H1 (cell line): ENCODE measurements at regions of chr2 and their contacts with region 1.

Region 1: GRCh38 chr2:10408649-10409579 is 39.2 kb downstream of the ODC1 start:
- DNase-seq: peak; percentile 84 to 93
- H3K4me3 ChIP-seq: no peak overlapping the region
- H3K27ac ChIP-seq: no peak overlapping the region
- H3K4me1 ChIP-seq: peaks cover 0 to 3% (median 2%) of the 10 kb centered on the region in 4 experiments; a peak in 2 of 7 replicates
- H3K27me3 ChIP-seq: no peaks in the 10 kb centered on the region; a peak in 1 of 7 replicates
- CTCF ChIP-seq: peak; percentile 94 to 99 (median 97)
- EP300 ChIP-seq: no peak
- POLR2A ChIP-seq: no peak
- RAD21 ChIP-seq: peak; percentile 98 to 99

Region 2: DNA sequence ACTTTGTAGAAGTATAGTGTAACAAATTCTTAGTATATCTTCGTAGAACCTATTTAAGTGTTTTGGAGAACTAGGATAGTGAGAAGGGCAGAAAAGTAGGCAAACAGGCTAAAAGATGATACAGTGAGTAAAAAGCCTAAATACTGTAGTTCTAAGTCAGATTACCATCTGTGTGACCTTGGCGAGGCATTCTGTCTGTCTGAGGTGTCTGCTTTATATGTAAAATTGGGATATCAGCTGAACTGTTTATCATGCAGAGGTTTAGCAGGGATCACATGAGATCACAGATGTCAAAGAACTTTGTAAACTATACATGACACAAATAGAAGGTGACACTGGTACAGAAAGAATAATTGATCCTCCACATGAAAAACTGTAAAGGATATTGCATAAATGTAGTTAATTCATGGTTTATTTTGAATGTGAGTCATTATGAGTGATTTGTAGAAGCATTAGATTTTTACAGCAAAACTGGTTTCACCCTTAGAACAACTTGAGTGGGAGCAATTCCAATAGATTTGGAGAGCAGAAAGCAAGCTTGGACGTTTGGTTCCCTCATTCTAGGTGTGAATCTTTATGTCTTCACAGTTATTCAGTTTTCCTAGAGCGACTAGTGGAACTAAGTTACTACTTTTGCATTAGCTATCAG is 523.8 kb before region 1 on chr2:
- CTCF ChIA-PET with region 1: no interaction called
- POLR2A ChIA-PET with region 1: no interaction called
- DNase-seq: no peak
- H3K4me3 ChIP-seq: no peak overlapping the region
- H3K27ac ChIP-seq: no peak overlapping the region
- H3K4me1 ChIP-seq: peaks cover 0 to 10% (median 4%) of the 10 kb centered on the region in 4 experiments; a peak in 6 of 7 replicates
- H3K27me3 ChIP-seq: no peaks in the 10 kb centered on the region
- CTCF ChIP-seq: no peak
- EP300 ChIP-seq: no peak
- POLR2A ChIP-seq: no peak
- RAD21 ChIP-seq: no peak

Region 3: GRCh38 chr2:10141736-10142642 is 266.9 kb before region 1 on chr2:
- CTCF ChIA-PET with region 1: interaction called, 30 read pairs
- POLR2A ChIA-PET with region 1: interaction called, 6 read pairs
- DNase-seq: peak in 1 of 2 experiments; percentile 77
- H3K4me3 ChIP-seq: no peak overlapping the region
- H3K27ac ChIP-seq: no peak overlapping the region
- H3K4me1 ChIP-seq: peaks cover 0 to 3% (median 0%) of the 10 kb centered on the region in 4 experiments; a peak in 1 of 7 replicates
- H3K27me3 ChIP-seq: 0 out of 7 replicates have a peak, but pooled peaks cover 0 to 3% (median 0%) of the 10 kb centered on the region in 4 experiments
- CTCF ChIP-seq: peak; percentile 64 to 80 (median 78)
- EP300 ChIP-seq: no peak
- POLR2A ChIP-seq: no peak
- RAD21 ChIP-seq: peak; percentile 64 to 65

Region 4: DNA sequence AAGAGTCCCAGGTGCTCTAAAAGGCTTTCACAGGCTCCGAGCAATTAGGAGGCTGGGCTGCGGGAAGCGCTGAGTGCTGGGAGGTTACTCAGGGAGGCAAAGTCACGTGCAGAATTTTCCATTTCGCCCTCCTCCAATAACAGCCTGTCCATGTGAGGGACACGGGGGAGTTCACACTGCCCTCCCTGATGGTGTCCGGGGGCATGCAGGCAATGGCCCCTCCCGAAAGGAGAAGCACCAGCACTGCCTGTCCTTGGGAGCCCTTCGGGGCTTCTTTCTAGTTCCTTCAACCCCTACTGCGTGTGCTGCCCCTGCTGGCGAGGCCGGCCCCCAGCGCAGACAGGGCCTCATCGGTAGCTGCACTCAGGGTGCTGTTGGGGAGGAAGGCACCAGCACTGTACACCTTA is 169.3 kb before region 1 on chr2:
- CTCF ChIA-PET with region 1: interaction called, 11 read pairs
- POLR2A ChIA-PET with region 1: no interaction called
- DNase-seq: peak in 1 of 2 experiments; percentile 69
- H3K4me3 ChIP-seq: no peak overlapping the region
- H3K27ac ChIP-seq: no peak overlapping the region
- H3K4me1 ChIP-seq: peaks cover 0 to 3% (median 0%) of the 10 kb centered on the region in 4 experiments; a peak in 1 of 7 replicates
- H3K27me3 ChIP-seq: no peaks in the 10 kb centered on the region
- CTCF ChIP-seq: peak in 2 of 3 experiments; percentile 52 to 67; a peak in 3 of 4 replicates
- EP300 ChIP-seq: no peak
- POLR2A ChIP-seq: no peak
- RAD21 ChIP-seq: peak; percentile 35 to 55; a peak in 3 of 4 replicates

Region 5: DNA sequence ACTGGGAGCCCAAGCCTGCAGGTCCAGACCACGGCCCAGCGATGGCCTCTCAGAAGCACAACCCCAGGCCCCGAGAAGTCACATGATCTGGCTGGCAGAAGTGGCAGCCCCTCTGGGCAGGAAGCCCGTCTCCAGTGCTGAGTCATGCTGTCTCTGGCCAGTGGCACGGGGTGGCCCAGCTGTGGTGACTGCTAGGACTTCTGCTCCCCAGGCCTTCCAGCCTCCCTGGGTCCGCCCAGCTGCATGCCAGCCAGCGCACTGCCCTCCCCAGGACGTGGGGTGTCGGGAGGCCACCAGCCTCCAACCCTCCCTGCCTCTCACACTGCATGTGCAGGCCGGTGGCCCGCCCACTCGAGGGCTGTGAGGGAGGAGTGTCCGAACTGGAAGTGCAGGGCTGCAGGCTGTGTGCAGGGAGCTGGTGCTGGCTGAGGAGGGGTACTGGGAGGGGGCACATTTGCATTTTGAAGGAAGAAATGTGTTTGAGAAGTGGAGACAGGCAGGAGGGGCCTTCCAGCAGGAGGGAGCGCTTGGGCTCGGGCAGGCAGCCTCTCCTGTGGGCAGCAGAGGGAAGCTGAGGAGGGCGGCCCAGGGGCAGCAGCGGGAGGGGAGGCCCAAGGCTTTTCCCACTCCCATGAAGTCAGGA is 123.2 kb before region 1 on chr2:
- CTCF ChIA-PET with region 1: interaction called, 22 read pairs
- POLR2A ChIA-PET with region 1: no interaction called
- DNase-seq: peak in 1 of 2 experiments; percentile 54
- H3K4me3 ChIP-seq: no peak overlapping the region
- H3K27ac ChIP-seq: no peak overlapping the region; the same call in 1 of the 2 replicates
- H3K4me1 ChIP-seq: peaks cover 0 to 8% (median 4%) of the 10 kb centered on the region in 4 experiments; a peak in 5 of 7 replicates
- H3K27me3 ChIP-seq: no peaks in the 10 kb centered on the region; a peak in 1 of 7 replicates
- CTCF ChIP-seq: no peak
- EP300 ChIP-seq: no peak
- POLR2A ChIP-seq: no peak
- RAD21 ChIP-seq: no peak

Region 6: GRCh38 chr2:10307561-10308156 is 101.3 kb before region 1 on chr2:
- CTCF ChIA-PET with region 1: interaction called, 32 read pairs
- POLR2A ChIA-PET with region 1: interaction called, 5 read pairs
- DNase-seq: no peak
- H3K4me3 ChIP-seq: no peak overlapping the region
- H3K27ac ChIP-seq: no peak overlapping the region
- H3K4me1 ChIP-seq: peaks cover 0 to 10% (median 4%) of the 10 kb centered on the region in 4 experiments; a peak in 5 of 7 replicates
- H3K27me3 ChIP-seq: peaks cover 11 to 36% (median 32%) of the 10 kb centered on the region in 4 experiments
- CTCF ChIP-seq: no peak
- EP300 ChIP-seq: no peak
- POLR2A ChIP-seq: no peak
- RAD21 ChIP-seq: no peak

Region 7: DNA sequence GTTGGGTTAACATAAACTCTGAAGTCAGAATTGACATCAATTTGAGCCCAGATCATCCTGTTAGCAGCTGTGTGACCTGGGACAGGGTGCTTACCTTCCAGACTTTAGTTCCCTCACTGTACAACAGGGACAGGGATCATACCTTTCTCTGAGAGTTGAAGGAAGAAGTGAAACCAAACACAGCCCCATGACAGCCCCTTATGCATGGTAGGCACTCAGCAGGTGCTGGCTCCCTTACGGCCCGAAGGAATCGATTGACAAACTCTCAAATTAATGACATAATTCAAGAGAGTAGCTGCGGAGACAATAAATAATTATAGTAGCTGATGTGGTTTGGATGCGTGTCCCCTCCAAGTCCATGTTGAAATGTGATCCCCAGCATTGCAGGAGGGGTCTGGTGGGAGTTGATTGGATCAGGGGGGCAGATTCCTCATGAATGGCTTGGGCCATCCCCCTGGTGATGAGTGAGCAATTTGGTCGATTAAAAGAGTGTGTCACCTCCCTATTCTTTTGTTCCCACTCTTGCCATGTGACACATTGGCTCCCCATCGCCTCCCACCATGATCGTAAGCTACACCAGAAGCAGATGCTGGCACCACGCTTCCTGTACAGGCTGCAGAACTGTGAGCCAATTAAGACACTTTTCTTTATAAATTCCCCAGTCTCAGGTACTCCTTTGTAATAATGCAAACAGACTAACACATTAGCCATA is 33.2 kb before region 1 on chr2:
- CTCF ChIA-PET with region 1: interaction called, 29 read pairs
- POLR2A ChIA-PET with region 1: no interaction called
- DNase-seq: no peak
- H3K4me3 ChIP-seq: no peak overlapping the region
- H3K27ac ChIP-seq: 0 out of 2 replicates have a peak overlapping the region, but pooled peaks have one; percentile 7
- H3K4me1 ChIP-seq: peaks cover 2 to 8% (median 6%) of the 10 kb centered on the region in 4 experiments; a peak in 5 of 7 replicates
- H3K27me3 ChIP-seq: no peaks in the 10 kb centered on the region
- CTCF ChIP-seq: no peak
- EP300 ChIP-seq: no peak
- POLR2A ChIP-seq: no peak
- RAD21 ChIP-seq: no peak

Region 8: DNA sequence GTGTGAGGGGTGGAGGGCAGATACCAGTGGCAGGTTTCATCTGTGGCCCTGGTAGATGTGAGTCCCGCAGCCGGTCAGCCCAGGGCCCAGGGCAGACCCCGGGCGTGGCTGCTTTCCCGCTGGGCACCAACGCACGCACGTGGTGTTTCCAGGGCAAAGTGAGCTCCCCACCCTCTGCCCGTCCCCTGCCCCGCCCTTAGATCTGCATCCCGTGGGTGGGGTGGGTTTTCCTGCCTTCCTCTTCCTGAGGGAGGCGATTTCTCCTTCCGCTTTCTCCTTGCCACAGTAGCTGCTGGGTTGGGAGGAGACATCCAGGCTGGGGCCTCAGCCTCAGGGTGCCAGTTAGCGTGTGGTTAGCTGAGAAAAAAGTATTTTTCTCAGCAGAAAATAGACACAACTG is 10.4 kb before region 1 on chr2:
- CTCF ChIA-PET with region 1: interaction called, 48 read pairs
- POLR2A ChIA-PET with region 1: no interaction called
- DNase-seq: no peak
- H3K4me3 ChIP-seq: no peak overlapping the region
- H3K27ac ChIP-seq: no peak overlapping the region
- H3K4me1 ChIP-seq: peaks cover under 1 to 5% (median under 1%) of the 10 kb centered on the region in 4 experiments; a peak in 5 of 7 replicates
- H3K27me3 ChIP-seq: no peaks in the 10 kb centered on the region
- CTCF ChIP-seq: no peak
- EP300 ChIP-seq: no peak
- POLR2A ChIP-seq: no peak
- RAD21 ChIP-seq: no peak

Region 9: DNA sequence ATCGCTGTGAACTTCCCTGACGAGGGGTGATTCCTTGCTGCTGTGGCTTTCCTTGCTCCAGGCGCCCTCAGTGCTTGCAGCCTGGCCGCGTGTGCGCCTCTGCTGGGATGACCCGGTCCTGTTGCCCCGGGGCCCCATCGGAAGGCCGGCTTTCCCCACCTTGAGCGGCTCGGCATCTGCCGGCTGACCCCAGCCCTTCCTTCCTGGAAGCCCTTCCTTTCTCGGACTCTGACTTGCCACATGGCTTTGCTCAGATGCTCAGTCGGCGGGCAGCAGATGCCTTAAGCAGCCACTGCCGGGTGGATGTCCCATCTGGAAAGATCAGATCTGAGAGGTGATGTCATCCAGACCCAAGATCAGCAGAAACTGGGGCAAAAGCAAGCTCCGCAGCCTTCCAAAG is 139.7 kb after region 1 on chr2:
- CTCF ChIA-PET with region 1: no interaction called
- POLR2A ChIA-PET with region 1: no interaction called
- DNase-seq: peak in 1 of 2 experiments; percentile 58
- H3K4me3 ChIP-seq: no peak overlapping the region
- H3K27ac ChIP-seq: no peak overlapping the region
- H3K4me1 ChIP-seq: peaks cover 6 to 13% (median 10%) of the 10 kb centered on the region in 4 experiments; a peak in 6 of 7 replicates
- H3K27me3 ChIP-seq: peaks cover 0 to 3% (median 0%) of the 10 kb centered on the region in 4 experiments; a peak in 3 of 7 replicates
- CTCF ChIP-seq: no peak
- EP300 ChIP-seq: no peak
- POLR2A ChIP-seq: no peak
- RAD21 ChIP-seq: no peak